Activated CD4-positive, alpha-beta memory T cell treated with anti-CD3 and anti-CD28 coated beads for 36 hours (primary cell): ENCODE measurements at regions of chr6 and their contacts with region 1.

Region 1: DNA sequence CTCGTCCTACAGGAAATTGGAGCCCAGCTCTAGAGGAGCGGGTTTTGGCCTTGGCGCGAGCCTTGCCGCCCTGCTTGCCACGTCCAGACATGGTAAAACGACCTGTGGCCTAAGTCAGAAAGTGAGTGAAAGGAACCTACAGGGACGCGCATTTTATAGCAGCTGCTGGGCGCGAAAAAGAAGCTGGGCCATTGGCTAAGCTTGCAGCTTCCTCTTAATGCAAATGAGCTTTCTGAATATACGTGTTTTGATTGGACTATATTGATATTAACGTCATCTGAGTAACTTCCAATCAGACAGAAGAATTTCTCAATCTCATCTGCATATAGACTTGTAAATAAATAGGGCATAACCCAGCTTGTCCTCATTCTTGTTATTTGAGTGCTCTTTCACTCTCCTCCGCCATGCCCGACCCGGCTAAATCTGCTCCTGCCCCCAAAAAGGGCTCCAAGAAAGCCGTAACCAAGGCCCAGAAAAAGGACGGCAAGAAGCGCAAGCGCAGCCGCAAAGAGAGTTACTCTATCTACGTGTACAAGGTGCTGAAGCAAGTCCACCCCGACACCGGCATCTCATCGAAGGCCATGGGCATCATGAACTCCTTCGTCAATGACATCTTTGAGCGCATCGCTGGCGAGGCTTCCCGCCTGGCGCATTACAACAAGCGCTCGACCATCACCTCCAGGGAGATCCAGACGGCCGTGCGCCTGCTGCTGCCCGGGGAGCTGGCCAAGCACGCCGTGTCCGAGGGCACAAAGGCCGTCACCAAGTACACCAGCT is 18.9 kb downstream of the OR2B2 start:
- DNase-seq: peak; percentile 95
- H3K4me3 Mint-ChIP-seq: no peak overlapping the region
- H3K27ac Mint-ChIP-seq: no peak overlapping the region
- H3K4me1 Mint-ChIP-seq: peaks cover 32% of the 10 kb centered on the region
- H3K27me3 Mint-ChIP-seq: peaks cover 7% of the 10 kb centered on the region

Region 2: GRCh38 chr6:26196846-26197648 is 1696.2 kb before region 1 on chr6:
- CTCF ChIA-PET with region 1: no interaction called
- POLR2A ChIA-PET with region 1: interaction called, 5 read pairs
- intact Hi-C with region 1: loop called (anchors 5 kb)
- DNase-seq: peak; percentile 84
- H3K4me3 Mint-ChIP-seq: peak overlapping the region; percentile 86
- H3K27ac Mint-ChIP-seq: peak overlapping the region; percentile 99
- H3K4me1 Mint-ChIP-seq: peaks cover 31% of the 10 kb centered on the region
- H3K27me3 Mint-ChIP-seq: peaks cover 3% of the 10 kb centered on the region

Region 3: GRCh38 chr6:27157459-27158315 is 735.6 kb before region 1 on chr6:
- CTCF ChIA-PET with region 1: interaction called, 17 read pairs
- POLR2A ChIA-PET with region 1: no interaction called
- intact Hi-C with region 1: no loop called
- DNase-seq: peak; percentile 91
- H3K4me3 Mint-ChIP-seq: peak overlapping the region; percentile 66
- H3K27ac Mint-ChIP-seq: peak overlapping the region; percentile 77
- H3K4me1 Mint-ChIP-seq: peaks cover 45% of the 10 kb centered on the region
- H3K27me3 Mint-ChIP-seq: no peaks in the 10 kb centered on the region

Region 4: GRCh38 chr6:27753668-27754407 is 139.4 kb before region 1 on chr6:
- CTCF ChIA-PET with region 1: interaction called, 10 read pairs
- POLR2A ChIA-PET with region 1: interaction called, 4 read pairs
- intact Hi-C with region 1: loop called (anchors 1 kb)
- DNase-seq: peak; percentile 87
- H3K4me3 Mint-ChIP-seq: peak overlapping the region; percentile 83
- H3K27ac Mint-ChIP-seq: peak overlapping the region; percentile 69
- H3K4me1 Mint-ChIP-seq: peaks cover 33% of the 10 kb centered on the region
- H3K27me3 Mint-ChIP-seq: peaks cover 3% of the 10 kb centered on the region

Region 5: GRCh38 chr6:27825025-27825793 is 68.0 kb before region 1 on chr6:
- CTCF ChIA-PET with region 1: interaction called, 68 read pairs
- POLR2A ChIA-PET with region 1: interaction called, 110 read pairs
- intact Hi-C with region 1: no loop called
- DNase-seq: no peak
- H3K4me3 Mint-ChIP-seq: peak overlapping the region; percentile 87
- H3K27ac Mint-ChIP-seq: peak overlapping the region; percentile 98
- H3K4me1 Mint-ChIP-seq: peaks cover 32% of the 10 kb centered on the region
- H3K27me3 Mint-ChIP-seq: no peaks in the 10 kb centered on the region

Region 6: GRCh38 chr6:28218271-28219248 is 325.3 kb after region 1 on chr6:
- CTCF ChIA-PET with region 1: no interaction called
- POLR2A ChIA-PET with region 1: no interaction called
- intact Hi-C with region 1: loop called (anchors 10 kb)
- DNase-seq: peak; percentile 53
- H3K4me3 Mint-ChIP-seq: peak overlapping the region; percentile 72
- H3K27ac Mint-ChIP-seq: no peak overlapping the region
- H3K4me1 Mint-ChIP-seq: peaks cover 4% of the 10 kb centered on the region
- H3K27me3 Mint-ChIP-seq: peaks cover 70% of the 10 kb centered on the region